ENCODE measurements at regions of chr6 and their contacts with region 1.

Region 1: DNA sequence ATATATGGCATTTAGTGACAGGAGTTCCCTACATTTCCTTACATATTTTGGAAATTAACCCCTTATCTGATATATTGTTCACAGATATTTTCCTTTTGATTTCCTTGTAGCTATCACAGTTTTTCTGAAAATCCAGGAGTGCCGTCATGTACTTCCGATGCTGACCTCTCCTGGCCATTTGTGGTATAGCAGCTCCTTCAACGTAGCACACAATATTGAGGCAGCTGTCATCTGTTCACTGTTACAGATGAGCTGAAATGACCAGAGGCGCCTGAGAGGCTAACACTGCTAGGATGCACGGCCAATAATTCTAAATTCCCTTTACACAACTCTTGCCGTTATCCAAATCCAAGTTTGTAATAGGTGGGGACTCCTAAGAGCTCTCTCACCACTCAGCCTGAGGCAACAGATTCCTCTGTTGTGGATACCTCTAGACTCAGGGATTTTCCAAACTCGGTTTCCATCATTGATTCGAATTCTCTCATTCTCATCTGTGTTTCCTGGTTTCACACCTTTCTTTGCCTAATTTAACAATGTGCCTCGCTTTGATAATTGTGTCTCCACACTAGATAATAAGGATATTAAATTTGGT is 53.0 kb downstream of the MMUT start:
- DNase-seq: peak; percentile 78
- H3K4me3 ChIP-seq: no peak overlapping the region
- H3K27ac ChIP-seq: no peak overlapping the region
- H3K4me1 ChIP-seq: no peaks in the 10 kb centered on the region
- H3K27me3 ChIP-seq: no peaks in the 10 kb centered on the region
- CTCF ChIP-seq: peak; percentile 79 to 80
- POLR2A ChIP-seq: no peak

Region 2: DNA sequence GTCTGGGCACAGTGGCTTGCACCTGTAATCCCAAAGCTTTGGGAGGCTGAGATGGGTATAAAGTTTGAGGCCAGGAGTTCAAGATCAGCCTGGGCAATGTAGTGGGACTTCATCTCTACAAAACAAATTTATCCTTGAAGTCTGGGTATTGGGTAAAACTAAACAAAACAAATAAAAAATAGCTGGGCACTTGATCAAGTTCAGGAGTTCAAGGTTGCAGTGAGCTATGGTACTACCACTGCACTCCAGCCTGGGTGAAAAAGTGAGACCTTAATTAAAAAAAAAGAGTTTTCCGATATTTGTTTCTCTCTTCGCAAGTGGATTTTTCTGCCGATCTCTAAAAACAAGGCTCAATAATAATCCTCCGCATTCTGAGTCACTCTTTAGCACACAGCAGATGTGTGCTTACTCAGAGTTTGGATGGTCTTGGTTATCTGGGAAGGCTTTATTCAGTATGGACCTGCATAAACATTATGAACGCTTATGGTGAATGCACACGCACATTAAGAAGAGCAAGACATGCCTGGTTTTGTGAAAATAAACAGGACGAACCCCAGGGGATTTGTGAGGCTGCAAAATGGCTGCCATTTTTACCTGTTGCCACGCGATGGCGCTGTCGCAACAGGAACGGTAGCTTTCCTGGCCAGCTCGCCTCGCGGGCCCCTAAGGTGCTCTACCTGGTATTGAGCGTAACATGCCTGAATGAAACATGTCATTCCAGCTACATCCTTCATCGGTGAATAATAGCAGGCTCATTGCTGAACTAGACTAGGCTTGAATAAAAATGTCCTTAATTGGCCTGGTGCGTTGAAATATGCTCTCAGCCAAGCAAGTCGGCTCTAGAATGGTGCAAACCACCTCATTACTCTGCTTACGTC is 1622.2 kb before region 1 on chr6:
- CTCF ChIA-PET with region 1: interaction called, 70 read pairs
- POLR2A ChIA-PET with region 1: no interaction called
- dilution Hi-C with region 1: no loop called
- intact Hi-C with region 1: loop called (anchors 1 kb)
- DNase-seq: peak; percentile 52
- H3K4me3 ChIP-seq: no peak overlapping the region
- H3K27ac ChIP-seq: no peak overlapping the region
- H3K4me1 ChIP-seq: no peaks in the 10 kb centered on the region
- H3K27me3 ChIP-seq: peaks cover 10 to 14% of the 10 kb centered on the region in 2 experiments
- CTCF ChIP-seq: peak; percentile 76 to 86
- POLR2A ChIP-seq: no peak

Region 3: DNA sequence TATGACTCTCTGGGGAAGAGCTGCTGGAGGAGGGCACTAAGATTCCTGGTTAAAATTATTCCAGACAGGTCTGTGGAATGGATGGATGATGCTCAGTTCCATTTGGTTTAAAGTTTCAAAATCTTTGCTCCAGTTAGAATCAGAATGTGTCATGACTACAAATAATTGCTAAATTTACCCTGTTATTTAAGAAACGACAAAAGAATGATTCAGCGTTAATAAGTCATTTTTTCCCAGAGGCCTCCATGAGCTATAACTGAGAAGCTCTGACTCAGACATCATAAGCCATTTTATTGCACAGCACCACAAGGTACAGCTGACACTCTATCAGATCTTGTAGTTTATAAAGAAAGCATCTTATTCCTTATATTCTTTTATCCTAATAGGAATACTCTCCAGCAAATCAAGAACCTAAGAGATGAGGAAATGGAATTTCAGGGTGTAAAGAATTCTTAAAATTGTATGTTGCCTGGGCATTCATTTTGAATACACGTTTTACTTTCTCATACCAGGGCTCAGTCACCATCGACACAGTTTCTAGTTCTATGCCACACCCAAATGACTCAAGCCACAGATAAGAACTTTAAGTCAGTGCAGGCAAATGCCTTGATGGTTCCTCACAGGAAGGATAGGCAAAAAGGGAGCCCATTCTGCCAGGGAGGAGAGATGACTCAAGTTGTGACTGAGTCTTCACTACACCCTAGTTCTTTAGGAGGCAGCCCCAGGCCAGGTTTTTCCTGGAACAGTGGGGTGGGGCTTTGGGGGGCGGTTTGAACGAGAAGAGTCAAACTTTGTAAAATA is 582.9 kb before region 1 on chr6:
- CTCF ChIA-PET with region 1: interaction called, 5 read pairs
- POLR2A ChIA-PET with region 1: no interaction called
- dilution Hi-C with region 1: no loop called
- intact Hi-C with region 1: loop called (anchors 5 kb)
- DNase-seq: peak; percentile 71
- H3K4me3 ChIP-seq: peak overlapping the region in 2 of 3 experiments; percentile 20 to 28
- H3K27ac ChIP-seq: peak overlapping the region; percentile 94
- H3K4me1 ChIP-seq: peaks cover 25% of the 10 kb centered on the region
- H3K27me3 ChIP-seq: no peaks in the 10 kb centered on the region
- CTCF ChIP-seq: no peak
- POLR2A ChIP-seq: no peak

Region 4: GRCh38 chr6:49202924-49203536 is 207.0 kb before region 1 on chr6:
- CTCF ChIA-PET with region 1: interaction called, 42 read pairs
- POLR2A ChIA-PET with region 1: no interaction called
- dilution Hi-C with region 1: no loop called
- intact Hi-C with region 1: no loop called
- DNase-seq: no peak
- H3K4me3 ChIP-seq: no peak overlapping the region
- H3K27ac ChIP-seq: no peak overlapping the region
- H3K4me1 ChIP-seq: no peaks in the 10 kb centered on the region
- H3K27me3 ChIP-seq: peaks cover 0 to 2% of the 10 kb centered on the region in 2 experiments
- CTCF ChIP-seq: no peak
- POLR2A ChIP-seq: no peak

Region 5: DNA sequence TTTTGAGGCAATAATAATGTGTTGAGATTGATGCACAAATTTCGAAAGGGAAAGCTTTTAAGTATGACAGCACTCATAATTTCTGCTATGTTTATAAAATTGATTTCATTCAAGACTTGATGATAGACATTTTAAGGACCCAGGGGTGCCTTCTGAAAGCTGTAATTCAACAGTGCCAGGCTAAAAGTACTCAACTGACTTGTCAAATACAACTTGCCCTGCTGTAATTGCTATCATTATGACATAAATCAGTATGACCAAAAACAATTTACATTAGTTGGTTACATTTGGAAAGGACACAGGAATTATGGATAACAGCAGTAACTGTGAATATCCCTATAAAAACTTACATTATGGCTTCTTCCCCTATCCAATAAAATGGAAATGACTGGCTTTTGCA is 125.9 kb before region 1 on chr6:
- CTCF ChIA-PET with region 1: interaction called, 10 read pairs
- POLR2A ChIA-PET with region 1: no interaction called
- dilution Hi-C with region 1: no loop called
- intact Hi-C with region 1: no loop called
- DNase-seq: no peak
- H3K4me3 ChIP-seq: no peak overlapping the region
- H3K27ac ChIP-seq: no peak overlapping the region
- H3K4me1 ChIP-seq: no peaks in the 10 kb centered on the region
- H3K27me3 ChIP-seq: no peaks in the 10 kb centered on the region
- CTCF ChIP-seq: no peak
- POLR2A ChIP-seq: no peak

Region 6: GRCh38 chr6:49326337-49326736 is 83.7 kb before region 1 on chr6:
- CTCF ChIA-PET with region 1: interaction called, 11 read pairs
- POLR2A ChIA-PET with region 1: no interaction called
- dilution Hi-C with region 1: no loop called
- intact Hi-C with region 1: loop called (anchors 1 kb)
- DNase-seq: peak; percentile 95
- H3K4me3 ChIP-seq: peak overlapping the region in 1 of 3 experiments; percentile 4
- H3K27ac ChIP-seq: peak overlapping the region; percentile 99
- H3K4me1 ChIP-seq: peaks cover 33% of the 10 kb centered on the region
- H3K27me3 ChIP-seq: no peaks in the 10 kb centered on the region
- CTCF ChIP-seq: no peak
- POLR2A ChIP-seq: peak; percentile 44

Region 7: GRCh38 chr6:49423817-49424216 is 13.8 kb after region 1 on chr6:
- CTCF ChIA-PET with region 1: interaction called, 11 read pairs
- POLR2A ChIA-PET with region 1: no interaction called
- dilution Hi-C with region 1: no loop called
- intact Hi-C with region 1: no loop called
- DNase-seq: peak; percentile 14
- H3K4me3 ChIP-seq: no peak overlapping the region
- H3K27ac ChIP-seq: no peak overlapping the region
- H3K4me1 ChIP-seq: no peaks in the 10 kb centered on the region
- H3K27me3 ChIP-seq: no peaks in the 10 kb centered on the region
- CTCF ChIP-seq: no peak
- POLR2A ChIP-seq: no peak

Region 8: DNA sequence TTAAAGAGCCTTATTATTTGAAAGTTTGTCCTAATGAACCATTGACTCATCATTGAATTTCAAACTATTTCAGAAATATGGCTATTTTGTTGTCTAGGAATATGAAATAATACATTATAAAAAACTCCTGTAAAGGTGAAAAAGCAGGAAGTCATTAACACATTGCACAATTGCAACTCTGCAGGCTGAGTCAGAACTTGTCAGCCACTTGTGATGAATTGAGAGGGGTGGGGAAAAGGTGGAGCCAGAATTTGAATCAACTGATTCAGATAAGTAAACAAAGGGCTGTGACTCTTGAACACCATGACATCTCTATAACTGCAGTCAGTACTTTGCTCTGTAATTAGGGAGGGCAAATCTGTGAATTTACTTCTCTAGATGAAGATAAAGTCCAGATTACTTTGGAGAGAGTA is 146.4 kb after region 1 on chr6:
- CTCF ChIA-PET with region 1: no interaction called
- POLR2A ChIA-PET with region 1: no interaction called
- dilution Hi-C with region 1: no loop called
- intact Hi-C with region 1: no loop called
- DNase-seq: peak; percentile 95
- H3K4me3 ChIP-seq: no peak overlapping the region
- H3K27ac ChIP-seq: peak overlapping the region; percentile 76
- H3K4me1 ChIP-seq: peaks cover 28% of the 10 kb centered on the region
- H3K27me3 ChIP-seq: no peaks in the 10 kb centered on the region
- CTCF ChIP-seq: no peak
- POLR2A ChIP-seq: no peak

Region 9: GRCh38 chr6:49685455-49685854 is 275.4 kb after region 1 on chr6:
- CTCF ChIA-PET with region 1: no interaction called
- POLR2A ChIA-PET with region 1: no interaction called
- dilution Hi-C with region 1: no loop called
- intact Hi-C with region 1: no loop called
- DNase-seq: no peak
- H3K4me3 ChIP-seq: no peak overlapping the region
- H3K27ac ChIP-seq: no peak overlapping the region
- H3K4me1 ChIP-seq: no peaks in the 10 kb centered on the region
- H3K27me3 ChIP-seq: no peaks in the 10 kb centered on the region
- CTCF ChIP-seq: no peak
- POLR2A ChIP-seq: no peak

Measured in endothelial cell of umbilical vein (primary cell).